CD4-positive, alpha-beta memory T cell (primary cell): ENCODE measurements at regions of chrX and their contacts with region 1.

Region 1: GRCh38 chrX:65667503-65668376 is at the start of gene MSN:
- DNase-seq: peak; percentile 71 to 80 (median 75)
- H3K4me3 ChIP-seq: peak within 1 kb of the TSS; percentile 82 to 84
- H3K4me3 Mint-ChIP-seq: peak within 1 kb of the TSS; percentile 94 to 97 (median 95)
- H3K27ac ChIP-seq: peak within 1 kb of the TSS; percentile 78
- H3K27ac Mint-ChIP-seq: peak within 1 kb of the TSS; percentile 88 to 96 (median 94)
- H3K4me1 ChIP-seq: peaks cover 30% of the 10 kb centered on the region
- H3K4me1 Mint-ChIP-seq: peaks cover 23 to 59% (median 42%) of the 10 kb centered on the region in 4 donors
- H3K27me3 ChIP-seq: no peaks in the 10 kb centered on the region
- H3K27me3 Mint-ChIP-seq: no peaks in the 10 kb centered on the region
- total RNA-seq, gene MSN: 334 to 343 TPM

Region 2: GRCh38 chrX:65480960-65481359 is 186.8 kb before region 1 on chrX:
- CTCF ChIA-PET with region 1: no interaction called
- POLR2A ChIA-PET with region 1: no interaction called
- intact Hi-C with region 1: no loop called
- DNase-seq: no peak
- H3K4me3 ChIP-seq: no peak overlapping the region
- H3K4me3 Mint-ChIP-seq: peak overlapping the region in 1 of 8 donors; percentile 17
- H3K27ac ChIP-seq: no peak overlapping the region
- H3K27ac Mint-ChIP-seq: no peak overlapping the region
- H3K4me1 ChIP-seq: no peaks in the 10 kb centered on the region
- H3K4me1 Mint-ChIP-seq: no peaks in the 10 kb centered on the region
- H3K27me3 ChIP-seq: no peaks in the 10 kb centered on the region
- H3K27me3 Mint-ChIP-seq: no peaks in the 10 kb centered on the region

Region 3: DNA sequence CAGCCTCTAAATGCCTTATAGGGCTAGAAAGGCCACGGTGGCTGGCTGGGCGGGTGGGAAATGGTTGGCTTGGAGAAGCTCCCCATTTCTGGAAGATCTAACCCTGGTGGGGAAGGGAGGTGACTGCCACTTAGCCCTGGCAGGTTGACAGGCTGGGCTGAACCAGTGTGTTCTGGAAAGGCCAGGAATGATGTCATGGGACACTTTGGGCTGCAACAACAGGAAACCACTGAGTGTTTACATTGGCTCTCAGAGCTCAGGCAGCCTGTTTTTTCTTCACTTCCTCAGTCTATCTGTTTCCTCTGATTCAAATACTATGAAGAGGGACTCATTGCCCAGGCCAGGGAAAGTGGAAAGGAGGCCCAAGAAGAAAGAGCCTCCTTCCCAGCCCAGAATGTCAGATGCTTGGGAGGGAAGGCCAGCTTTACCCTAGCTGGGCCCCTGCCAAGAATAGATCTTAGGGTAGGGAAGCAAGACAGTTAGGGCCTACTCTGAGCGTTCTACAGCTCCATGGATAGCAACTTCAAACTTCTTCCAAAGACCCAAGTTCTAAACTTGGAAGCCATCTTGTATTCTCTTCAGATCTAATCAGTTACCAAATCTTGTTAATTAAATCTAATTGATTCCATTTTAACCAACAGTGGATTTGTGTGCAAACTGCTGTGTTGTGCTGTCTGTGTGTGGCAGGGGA is 66.1 kb before region 1 on chrX:
- CTCF ChIA-PET with region 1: interaction called, 9 read pairs
- POLR2A ChIA-PET with region 1: interaction called, 19 read pairs
- intact Hi-C with region 1: no loop called
- DNase-seq: peak; percentile 47 to 75 (median 60)
- H3K4me3 ChIP-seq: no peak overlapping the region
- H3K4me3 Mint-ChIP-seq: peak overlapping the region; percentile 45 to 89 (median 70)
- H3K27ac ChIP-seq: peak overlapping the region; percentile 42
- H3K27ac Mint-ChIP-seq: peak overlapping the region; percentile 89 to 96 (median 93)
- H3K4me1 ChIP-seq: peaks cover 74% of the 10 kb centered on the region
- H3K4me1 Mint-ChIP-seq: peaks cover 46 to 89% (median 73%) of the 10 kb centered on the region in 4 donors
- H3K27me3 ChIP-seq: no peaks in the 10 kb centered on the region
- H3K27me3 Mint-ChIP-seq: no peaks in the 10 kb centered on the region

Region 4: GRCh38 chrX:65677954-65678469 is 10.3 kb after region 1 on chrX:
- CTCF ChIA-PET with region 1: no interaction called
- POLR2A ChIA-PET with region 1: interaction called, 7 read pairs
- intact Hi-C with region 1: loop called (anchors 2 kb)
- DNase-seq: no peak
- H3K4me3 ChIP-seq: no peak overlapping the region
- H3K4me3 Mint-ChIP-seq: peak overlapping the region in 7 of 8 donors; percentile 57 to 83 (median 70)
- H3K27ac ChIP-seq: no peak overlapping the region
- H3K27ac Mint-ChIP-seq: peak overlapping the region; percentile 2 to 92 (median 68)
- H3K4me1 ChIP-seq: peaks cover 100% of the 10 kb centered on the region
- H3K4me1 Mint-ChIP-seq: peaks cover 65 to 97% (median 78%) of the 10 kb centered on the region in 4 donors
- H3K27me3 ChIP-seq: no peaks in the 10 kb centered on the region
- H3K27me3 Mint-ChIP-seq: no peaks in the 10 kb centered on the region

Region 5: GRCh38 chrX:65688403-65688871 is 20.7 kb after region 1 on chrX:
- CTCF ChIA-PET with region 1: interaction called, 6 read pairs
- POLR2A ChIA-PET with region 1: interaction called, 16 read pairs
- intact Hi-C with region 1: loop called (anchors 2 kb)
- DNase-seq: no peak
- H3K4me3 ChIP-seq: no peak overlapping the region
- H3K4me3 Mint-ChIP-seq: peak overlapping the region; percentile 10 to 84 (median 72)
- H3K27ac ChIP-seq: peak overlapping the region; percentile 17
- H3K27ac Mint-ChIP-seq: peak overlapping the region; percentile 38 to 94 (median 86)
- H3K4me1 ChIP-seq: peaks cover 100% of the 10 kb centered on the region
- H3K4me1 Mint-ChIP-seq: peaks cover 58 to 95% (median 78%) of the 10 kb centered on the region in 4 donors
- H3K27me3 ChIP-seq: no peaks in the 10 kb centered on the region
- H3K27me3 Mint-ChIP-seq: no peaks in the 10 kb centered on the region

Region 6: GRCh38 chrX:65697915-65698796 is 30.4 kb after region 1 on chrX:
- CTCF ChIA-PET with region 1: interaction called, 12 read pairs
- POLR2A ChIA-PET with region 1: interaction called, 106 read pairs
- intact Hi-C with region 1: loop called (anchors 2 kb)
- DNase-seq: peak; percentile 71 to 86 (median 76)
- H3K4me3 ChIP-seq: peak overlapping the region; percentile 31 to 38
- H3K4me3 Mint-ChIP-seq: peak overlapping the region; percentile 71 to 92 (median 84)
- H3K27ac ChIP-seq: peak overlapping the region; percentile 56
- H3K27ac Mint-ChIP-seq: peak overlapping the region; percentile 89 to 97 (median 95)
- H3K4me1 ChIP-seq: peaks cover 95% of the 10 kb centered on the region
- H3K4me1 Mint-ChIP-seq: peaks cover 53 to 99% (median 86%) of the 10 kb centered on the region in 4 donors
- H3K27me3 ChIP-seq: no peaks in the 10 kb centered on the region
- H3K27me3 Mint-ChIP-seq: no peaks in the 10 kb centered on the region

Region 7: DNA sequence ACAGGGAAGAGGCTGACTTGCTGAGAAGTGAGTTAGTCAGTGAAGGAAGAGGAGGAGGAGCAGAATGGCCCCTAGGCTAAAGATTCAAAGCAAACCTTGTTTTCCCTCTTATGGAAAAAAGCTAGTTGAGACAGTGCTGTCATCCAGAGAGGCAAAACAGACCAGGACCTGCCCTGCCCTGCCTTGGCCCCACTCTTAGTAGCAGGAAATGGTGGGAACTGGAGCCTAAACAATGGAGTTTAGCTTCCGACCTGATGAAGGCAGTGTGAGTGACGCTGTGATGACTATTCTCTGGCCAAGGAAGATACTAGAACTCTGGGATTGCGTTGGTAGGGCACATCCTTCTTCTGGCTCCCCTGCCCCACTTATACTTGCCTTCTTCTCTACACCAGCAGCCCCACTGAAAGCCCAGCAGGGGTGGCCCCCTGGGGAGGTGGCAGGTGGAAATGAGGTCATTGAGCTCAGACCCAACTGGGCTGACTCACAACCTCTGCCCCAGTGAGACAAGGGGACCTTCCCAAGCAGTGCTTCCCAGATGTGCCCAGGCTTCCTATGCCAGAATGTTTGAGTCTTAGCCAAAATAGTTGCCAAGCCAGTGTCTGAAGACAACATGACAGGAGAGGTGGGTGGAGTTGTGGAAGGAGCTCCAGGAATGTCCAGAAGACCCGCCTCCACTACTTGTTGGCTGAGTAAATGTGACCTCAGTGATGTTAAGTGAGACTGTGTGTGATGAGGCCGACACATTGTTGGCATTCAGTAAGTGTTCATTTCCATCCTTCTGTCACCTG is 38.5 kb after region 1 on chrX:
- CTCF ChIA-PET with region 1: interaction called, 12 read pairs
- POLR2A ChIA-PET with region 1: interaction called, 23 read pairs
- intact Hi-C with region 1: no loop called
- DNase-seq: peak in 1 of 5 donors; percentile 75
- H3K4me3 ChIP-seq: peak overlapping the region in 1 of 2 donors; percentile 15
- H3K4me3 Mint-ChIP-seq: peak overlapping the region in 7 of 8 donors; percentile 32 to 82 (median 63)
- H3K27ac ChIP-seq: peak overlapping the region; percentile 61
- H3K27ac Mint-ChIP-seq: peak overlapping the region; percentile 85 to 97 (median 92)
- H3K4me1 ChIP-seq: peaks cover 71% of the 10 kb centered on the region
- H3K4me1 Mint-ChIP-seq: peaks cover 51 to 82% (median 68%) of the 10 kb centered on the region in 4 donors
- H3K27me3 ChIP-seq: no peaks in the 10 kb centered on the region
- H3K27me3 Mint-ChIP-seq: no peaks in the 10 kb centered on the region

Region 8: DNA sequence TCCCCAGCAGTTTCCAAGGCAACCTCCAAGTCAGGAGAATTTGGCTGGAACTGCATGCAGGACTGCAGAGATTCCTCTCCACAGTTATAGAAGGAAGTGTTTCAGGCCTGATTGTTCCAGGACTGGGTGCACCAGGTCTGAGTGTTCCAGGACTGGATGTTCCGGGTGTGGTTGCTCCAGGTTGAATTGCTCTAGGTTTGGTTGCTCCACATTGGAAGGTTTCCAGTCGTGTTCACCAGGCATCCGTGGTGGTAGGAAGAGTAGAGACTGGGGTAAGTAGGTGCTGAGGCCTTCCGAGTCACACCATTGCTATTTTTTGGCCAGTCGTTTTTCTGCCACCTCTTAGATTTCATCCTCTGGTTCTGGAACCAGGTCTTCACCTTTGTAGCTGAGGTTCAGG is 105.1 kb after region 1 on chrX:
- CTCF ChIA-PET with region 1: no interaction called
- POLR2A ChIA-PET with region 1: no interaction called
- intact Hi-C with region 1: no loop called
- DNase-seq: no peak
- H3K4me3 ChIP-seq: no peak overlapping the region
- H3K4me3 Mint-ChIP-seq: no peak overlapping the region
- H3K27ac ChIP-seq: no peak overlapping the region
- H3K27ac Mint-ChIP-seq: no peak overlapping the region
- H3K4me1 ChIP-seq: no peaks in the 10 kb centered on the region
- H3K4me1 Mint-ChIP-seq: peaks cover 0 to 11% (median 4%) of the 10 kb centered on the region in 4 donors
- H3K27me3 ChIP-seq: no peaks in the 10 kb centered on the region
- H3K27me3 Mint-ChIP-seq: no peaks in the 10 kb centered on the region